ENCODE measurements at regions of chr4 and their contacts with region 1.

Region 1: GRCh38 chr4:140996766-140997165 is 136.5 kb downstream of the RNF150 start:
- DNase-seq: no peak
- ATAC-seq: no peak
- H3K4me3 ChIP-seq: no peak overlapping the region
- H3K27ac ChIP-seq: peak overlapping the region in 6 of 12 donors; percentile 1 to 75 (median 38)
- H3K4me1 ChIP-seq: peaks cover 0 to 57% (median 22%) of the 10 kb centered on the region in 12 donors
- H3K27me3 ChIP-seq: no peaks in the 10 kb centered on the region
- CTCF ChIP-seq: peak in 1 of 12 donors; percentile 41
- POLR2A ChIP-seq: no peak

Region 2: GRCh38 chr4:140135529-140136088 is 861.2 kb before region 1 on chr4:
- intact Hi-C with region 1: no loop called
- DNase-seq: peak; percentile 41 to 82 (median 53)
- ATAC-seq: peak; percentile 37 to 73 (median 53)
- H3K4me3 ChIP-seq: peak overlapping the region in 2 of 12 donors; percentile 19 to 21
- H3K27ac ChIP-seq: peak overlapping the region in 4 of 12 donors; percentile 3 to 40 (median 18)
- H3K4me1 ChIP-seq: peaks cover 0 to 27% (median 11%) of the 10 kb centered on the region in 12 donors
- H3K27me3 ChIP-seq: no peaks in the 10 kb centered on the region
- CTCF ChIP-seq: no peak
- POLR2A ChIP-seq: no peak

Region 3: DNA sequence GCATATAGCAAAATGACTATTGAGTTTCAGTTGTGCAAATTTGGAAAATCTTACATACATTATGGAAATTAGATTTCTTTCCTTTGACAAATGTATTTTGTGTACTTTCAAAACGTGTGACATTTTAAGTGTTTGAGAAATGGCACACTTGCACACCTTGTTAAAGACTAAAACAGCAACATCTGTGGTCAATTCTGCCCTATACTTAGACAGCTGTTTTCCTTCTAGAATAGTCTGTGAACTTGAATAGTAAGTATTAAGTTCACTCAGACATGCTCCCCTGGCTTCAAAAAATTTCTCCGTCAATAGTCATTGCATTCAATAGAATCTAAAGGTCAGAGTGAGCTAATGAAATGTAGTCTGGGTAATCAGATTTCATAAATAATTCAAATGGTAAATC is 218.9 kb before region 1 on chr4:
- intact Hi-C with region 1: no loop called
- DNase-seq: no peak
- ATAC-seq: no peak
- H3K4me3 ChIP-seq: no peak overlapping the region
- H3K27ac ChIP-seq: no peak overlapping the region
- H3K4me1 ChIP-seq: no peaks in the 10 kb centered on the region
- H3K27me3 ChIP-seq: no peaks in the 10 kb centered on the region
- CTCF ChIP-seq: no peak
- POLR2A ChIP-seq: no peak

Region 4: GRCh38 chr4:140884431-140885058 is 112.2 kb before region 1 on chr4:
- intact Hi-C with region 1: loop called in 2 of 10 experiments (anchors 2 to 10 kb)
- DNase-seq: peak in 4 of 5 donors; percentile 39 to 60 (median 44)
- ATAC-seq: peak; percentile 47 to 72 (median 70)
- H3K4me3 ChIP-seq: no peak overlapping the region
- H3K27ac ChIP-seq: peak overlapping the region in 1 of 12 donors; percentile 30
- H3K4me1 ChIP-seq: peaks cover 0 to 16% (median 3%) of the 10 kb centered on the region in 12 donors
- H3K27me3 ChIP-seq: no peaks in the 10 kb centered on the region
- CTCF ChIP-seq: peak; percentile 50 to 71 (median 61)
- POLR2A ChIP-seq: no peak